ENCODE measurements at regions of chr16 and their contacts with region 1.

Region 1: GRCh38 chr16:68417711-68418301 is 30.5 kb downstream of the SMPD3 start:
- DNase-seq: peak; percentile 35 to 91 (median 85)
- ATAC-seq: peak; percentile 92
- H3K4me3 ChIP-seq: peak overlapping the region; percentile 32
- H3K4me3 Mint-ChIP-seq: peak overlapping the region; percentile 76 to 89 (median 86)
- H3K27ac ChIP-seq: peak overlapping the region; percentile 67
- H3K27ac Mint-ChIP-seq: peak overlapping the region; percentile 94 to 100 (median 98)
- H3K4me1 ChIP-seq: peaks cover 40 to 64% of the 10 kb centered on the region in 2 donors
- H3K4me1 Mint-ChIP-seq: peaks cover 44 to 89% (median 75%) of the 10 kb centered on the region in 7 donors
- H3K27me3 ChIP-seq: no peaks in the 10 kb centered on the region
- H3K27me3 Mint-ChIP-seq: no peaks in the 10 kb centered on the region

Region 2: DNA sequence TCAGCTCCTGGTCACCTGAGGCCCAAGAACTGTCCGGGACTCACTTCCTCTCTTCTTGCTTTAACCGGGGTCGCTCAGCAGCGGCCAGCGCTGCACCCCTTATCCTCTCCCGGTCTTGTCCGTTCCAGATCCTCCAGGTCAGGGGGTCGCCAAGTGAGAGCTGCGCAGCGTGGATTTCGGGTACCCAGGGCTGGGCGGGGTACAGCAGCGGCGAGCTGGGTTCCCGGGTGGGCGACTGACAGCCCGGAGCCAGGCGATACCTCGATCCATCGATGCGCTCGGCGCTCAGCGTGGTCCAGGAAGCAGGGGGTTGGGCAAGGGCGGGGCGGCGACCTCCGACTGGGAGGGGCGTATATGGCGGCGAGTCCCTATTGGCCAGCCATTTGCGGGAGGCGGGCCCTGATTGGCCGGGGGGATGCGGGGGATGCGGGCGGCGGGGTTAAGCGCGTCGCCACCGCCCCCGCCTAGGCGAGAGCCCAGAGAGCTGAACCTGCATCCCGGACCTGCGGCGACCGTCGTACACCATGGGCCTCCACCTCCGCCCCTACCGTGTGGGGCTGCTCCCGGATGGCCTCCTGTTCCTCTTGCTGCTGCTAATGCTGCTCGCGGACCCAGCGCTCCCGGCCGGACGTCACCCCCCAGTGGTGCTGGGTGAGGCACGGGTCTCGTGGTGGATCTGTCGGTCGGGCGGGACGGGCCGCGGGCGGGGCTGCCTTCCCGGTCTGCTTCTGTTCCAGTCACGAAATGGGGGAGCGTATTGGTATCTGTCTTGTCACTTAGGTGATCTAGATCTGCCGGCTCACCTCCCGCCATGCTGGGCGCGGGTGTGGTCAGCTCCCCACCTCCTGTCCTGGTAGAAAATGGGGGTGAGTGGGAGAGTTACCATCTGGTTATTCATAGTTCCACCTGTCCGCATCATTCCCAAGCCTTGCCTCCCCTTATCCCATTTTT is 172.6 kb before region 1 on chr16 and contains the start of gene PLA2G15:
- CTCF ChIA-PET with region 1: no interaction called
- POLR2A ChIA-PET with region 1: no interaction called
- intact Hi-C with region 1: loop called in 1 of 2 experiments (anchors 5 kb)
- DNase-seq: peak; percentile 89 to 96 (median 94)
- ATAC-seq: peak; percentile 99
- H3K4me3 ChIP-seq: peak within 1 kb of the TSS; percentile 99
- H3K4me3 Mint-ChIP-seq: peak within 1 kb of the TSS; percentile 91 to 100 (median 98)
- H3K27ac ChIP-seq: peak within 1 kb of the TSS; percentile 68
- H3K27ac Mint-ChIP-seq: peak within 1 kb of the TSS; percentile 61 to 94 (median 86)
- H3K4me1 ChIP-seq: peaks cover 13 to 14% of the 10 kb centered on the region in 2 donors
- H3K4me1 Mint-ChIP-seq: peaks cover 8 to 33% (median 28%) of the 10 kb centered on the region in 7 donors
- H3K27me3 ChIP-seq: no peaks in the 10 kb centered on the region
- H3K27me3 Mint-ChIP-seq: peaks cover 0 to 2% (median 0%) of the 10 kb centered on the region in 5 donors
- total RNA-seq, gene PLA2G15: 8.5 to 16.8 (median 9.9) TPM

Region 3: DNA sequence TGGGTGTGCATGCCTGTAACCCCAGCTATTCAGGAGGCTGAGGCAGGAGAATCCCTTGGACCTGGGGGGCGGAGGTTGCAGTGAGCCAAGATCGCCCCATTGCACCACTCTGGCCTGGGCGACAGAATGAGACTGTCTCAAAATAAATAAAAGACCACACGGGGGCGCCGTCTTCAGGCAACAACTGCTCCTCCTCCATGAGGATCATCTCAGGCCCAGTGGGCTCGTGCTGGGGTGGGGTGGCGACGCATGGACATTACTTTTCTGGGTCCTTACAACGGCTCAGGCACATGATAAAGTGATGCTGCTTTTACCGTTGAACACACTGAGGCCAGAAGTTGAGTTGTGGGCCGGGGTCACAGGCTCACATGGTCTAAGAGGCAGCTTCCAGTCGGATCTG is 50.8 kb before region 1 on chr16:
- CTCF ChIA-PET with region 1: no interaction called
- POLR2A ChIA-PET with region 1: interaction called, 3 read pairs
- intact Hi-C with region 1: loop called in 1 of 2 experiments (anchors 5 kb)
- DNase-seq: peak in 5 of 9 donors; percentile 31 to 50 (median 38)
- ATAC-seq: no peak
- H3K4me3 ChIP-seq: no peak overlapping the region
- H3K4me3 Mint-ChIP-seq: peak overlapping the region in 2 of 10 donors; percentile 51 to 58
- H3K27ac ChIP-seq: no peak overlapping the region
- H3K27ac Mint-ChIP-seq: peak overlapping the region in 2 of 9 donors; percentile 3 to 70
- H3K4me1 ChIP-seq: peaks cover 23 to 51% of the 10 kb centered on the region in 2 donors
- H3K4me1 Mint-ChIP-seq: peaks cover 39 to 58% (median 48%) of the 10 kb centered on the region in 7 donors
- H3K27me3 ChIP-seq: no peaks in the 10 kb centered on the region
- H3K27me3 Mint-ChIP-seq: peaks cover 0 to 34% (median 0%) of the 10 kb centered on the region in 5 donors

Region 4: GRCh38 chr16:68406451-68407152 is 11.2 kb before region 1 on chr16:
- CTCF ChIA-PET with region 1: interaction called, 10 read pairs
- POLR2A ChIA-PET with region 1: interaction called, 27 read pairs
- intact Hi-C with region 1: loop called (anchors 1 to 2 kb)
- DNase-seq: no peak
- ATAC-seq: no peak
- H3K4me3 ChIP-seq: no peak overlapping the region
- H3K4me3 Mint-ChIP-seq: no peak overlapping the region
- H3K27ac ChIP-seq: no peak overlapping the region
- H3K27ac Mint-ChIP-seq: peak overlapping the region in 1 of 9 donors; percentile 28
- H3K4me1 ChIP-seq: peaks cover 3 to 5% of the 10 kb centered on the region in 2 donors
- H3K4me1 Mint-ChIP-seq: peaks cover 0 to 11% (median 5%) of the 10 kb centered on the region in 7 donors
- H3K27me3 ChIP-seq: no peaks in the 10 kb centered on the region
- H3K27me3 Mint-ChIP-seq: peaks cover 0 to 29% (median 0%) of the 10 kb centered on the region in 5 donors

Region 5: GRCh38 chr16:68470461-68471150 is 52.8 kb after region 1 on chr16:
- CTCF ChIA-PET with region 1: interaction called, 6 read pairs
- POLR2A ChIA-PET with region 1: interaction called, 16 read pairs
- intact Hi-C with region 1: no loop called
- DNase-seq: no peak
- ATAC-seq: peak; percentile 91
- H3K4me3 ChIP-seq: peak overlapping the region; percentile 68
- H3K4me3 Mint-ChIP-seq: peak overlapping the region; percentile 78 to 92 (median 86)
- H3K27ac ChIP-seq: peak overlapping the region; percentile 48
- H3K27ac Mint-ChIP-seq: peak overlapping the region; percentile 73 to 95 (median 87)
- H3K4me1 ChIP-seq: peaks cover 21 to 38% of the 10 kb centered on the region in 2 donors
- H3K4me1 Mint-ChIP-seq: peaks cover 38 to 53% (median 49%) of the 10 kb centered on the region in 7 donors
- H3K27me3 ChIP-seq: no peaks in the 10 kb centered on the region
- H3K27me3 Mint-ChIP-seq: peaks cover 0 to 15% (median 0%) of the 10 kb centered on the region in 5 donors

Region 6: DNA sequence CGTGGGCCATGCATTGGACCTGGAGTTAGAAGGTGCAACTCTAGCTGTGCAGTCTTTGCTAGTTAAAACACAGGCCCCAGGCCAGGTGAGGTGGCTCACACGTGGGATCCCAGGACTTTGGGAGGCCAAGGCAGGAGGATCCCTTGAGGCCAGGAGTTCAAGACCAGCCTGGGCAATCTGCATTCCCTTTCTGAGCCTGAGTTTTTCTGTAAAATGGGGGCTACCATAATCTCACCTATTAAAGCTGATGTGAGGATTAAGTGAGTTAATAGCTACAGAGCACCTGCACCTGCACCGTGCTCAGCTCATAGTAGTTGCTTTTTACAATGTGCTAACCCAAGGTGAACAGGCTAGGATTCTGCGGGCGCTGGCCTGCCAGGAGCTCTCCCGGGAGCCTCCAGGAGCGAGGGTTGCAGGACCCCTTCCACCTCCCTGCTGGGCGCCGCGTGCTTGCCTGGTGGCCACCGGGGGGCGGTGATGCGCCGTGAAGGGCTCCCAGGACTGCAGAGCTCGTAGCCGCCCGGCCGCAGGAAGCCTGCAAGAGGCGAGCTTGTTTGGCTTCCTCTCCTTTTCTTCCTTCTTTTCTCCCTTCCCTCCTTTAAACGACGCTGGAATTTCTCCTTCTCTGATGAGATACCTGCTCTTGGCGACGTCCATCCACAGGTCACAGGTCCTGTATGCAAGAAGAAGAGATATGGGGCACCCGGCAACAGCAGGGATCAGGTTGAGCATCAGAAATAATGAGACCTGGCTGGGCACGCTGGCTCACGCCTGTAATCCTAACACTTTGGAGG is 172.6 kb after region 1 on chr16:
- CTCF ChIA-PET with region 1: no interaction called
- POLR2A ChIA-PET with region 1: no interaction called
- intact Hi-C with region 1: no loop called
- DNase-seq: peak; percentile 14 to 59 (median 52)
- ATAC-seq: peak; percentile 83
- H3K4me3 ChIP-seq: no peak overlapping the region
- H3K4me3 Mint-ChIP-seq: peak overlapping the region in 4 of 10 donors; percentile 12 to 60 (median 28)
- H3K27ac ChIP-seq: no peak overlapping the region
- H3K27ac Mint-ChIP-seq: peak overlapping the region in 2 of 9 donors; percentile 83 to 89
- H3K4me1 ChIP-seq: no peaks in the 10 kb centered on the region
- H3K4me1 Mint-ChIP-seq: peaks cover 2 to 9% (median 4%) of the 10 kb centered on the region in 7 donors
- H3K27me3 ChIP-seq: no peaks in the 10 kb centered on the region
- H3K27me3 Mint-ChIP-seq: peaks cover 0 to 8% (median 0%) of the 10 kb centered on the region in 5 donors